Activated CD8-positive, alpha-beta T cell treated with anti-CD3 and anti-CD28 coated beads, Interleukin-2, amount 10 ng/mL, durations not matched to agents 7 days and 5 days (primary cell): ENCODE measurements at regions of chr9 and their contacts with region 1.

Region 1: GRCh38 chr9:121455527-121456239 is 44.0 kb downstream of the GGTA1 start:
- DNase-seq: peak; percentile 77
- ATAC-seq: peak; percentile 90
- H3K4me3 Mint-ChIP-seq: no peak overlapping the region
- H3K27ac Mint-ChIP-seq: no peak overlapping the region
- H3K4me1 Mint-ChIP-seq: peaks cover 31% of the 10 kb centered on the region
- H3K27me3 Mint-ChIP-seq: peaks cover 24% of the 10 kb centered on the region

Region 2: DNA sequence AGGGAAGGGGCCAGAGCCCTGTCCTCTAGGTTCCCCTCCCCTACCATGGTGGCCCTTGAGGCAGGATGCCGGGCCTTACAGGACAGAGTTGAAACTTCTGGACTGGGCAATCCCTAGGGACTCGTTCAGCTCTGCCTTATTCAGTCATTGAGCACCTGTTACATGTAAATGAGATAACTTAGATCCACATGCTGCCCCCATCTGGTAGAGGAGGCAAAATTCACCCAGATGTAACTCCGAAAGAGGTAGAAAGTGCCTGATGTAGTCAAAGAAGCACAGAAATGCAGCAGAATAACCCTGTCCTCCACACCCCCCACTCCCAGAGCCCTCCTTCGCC is 42.4 kb after region 1 on chr9:
- CTCF ChIA-PET with region 1: interaction called, 10 read pairs
- POLR2A ChIA-PET with region 1: no interaction called
- DNase-seq: peak; percentile 73
- ATAC-seq: peak; percentile 83
- H3K4me3 Mint-ChIP-seq: peak overlapping the region; percentile 47
- H3K27ac Mint-ChIP-seq: no peak overlapping the region
- H3K4me1 Mint-ChIP-seq: peaks cover 18% of the 10 kb centered on the region
- H3K27me3 Mint-ChIP-seq: peaks cover 53% of the 10 kb centered on the region

Region 3: DNA sequence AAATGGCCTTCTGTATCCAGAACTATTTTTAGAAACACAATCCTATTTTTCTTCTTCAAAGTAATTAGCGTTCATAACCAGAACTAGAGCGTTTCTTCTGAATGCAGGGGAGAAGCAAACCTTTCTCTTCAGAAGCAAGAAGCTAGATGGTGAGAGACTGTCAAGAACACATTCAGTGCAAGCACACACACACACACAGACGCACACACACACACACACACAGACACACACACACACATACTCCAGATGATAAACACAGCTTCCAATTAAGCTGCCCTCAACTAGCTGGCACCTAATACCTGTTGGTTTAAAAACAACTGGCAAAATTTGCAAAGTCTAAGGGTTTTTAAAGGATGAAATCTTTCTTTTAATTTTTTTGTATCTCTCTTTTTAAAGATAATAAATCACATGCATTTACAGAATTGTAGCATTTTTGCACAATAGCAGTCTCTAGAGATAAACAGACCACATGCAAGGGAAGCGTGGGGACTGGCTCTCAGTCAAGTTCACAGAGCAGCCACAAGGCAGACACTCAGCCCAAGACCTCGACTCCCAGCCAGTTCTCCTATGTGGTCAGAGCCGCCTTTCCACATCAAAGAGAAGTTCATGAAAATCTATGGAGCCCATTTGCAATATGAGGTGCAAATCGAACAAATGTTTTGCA is 498.9 kb after region 1 on chr9:
- CTCF ChIA-PET with region 1: no interaction called
- POLR2A ChIA-PET with region 1: no interaction called
- DNase-seq: no peak
- ATAC-seq: no peak
- H3K4me3 Mint-ChIP-seq: no peak overlapping the region
- H3K27ac Mint-ChIP-seq: no peak overlapping the region
- H3K4me1 Mint-ChIP-seq: peaks cover 13% of the 10 kb centered on the region
- H3K27me3 Mint-ChIP-seq: no peaks in the 10 kb centered on the region